Naive thymus-derived CD4-positive, alpha-beta T cell (primary cell): ENCODE measurements at regions of chr2 and their contacts with region 1.

Region 1: GRCh38 chr2:7427293-7428060 is 510.3 kb downstream of the RNF144A start:
- DNase-seq: peak in 7 of 9 donors; percentile 37 to 73 (median 63)
- ATAC-seq: peak; percentile 70
- H3K4me3 ChIP-seq: no peak overlapping the region
- H3K4me3 Mint-ChIP-seq: peak overlapping the region in 6 of 10 donors; percentile 0 to 87 (median 38)
- H3K27ac ChIP-seq: no peak overlapping the region
- H3K27ac Mint-ChIP-seq: peak overlapping the region in 7 of 9 donors; percentile 3 to 98 (median 78)
- H3K4me1 ChIP-seq: peaks cover 0 to 29% of the 10 kb centered on the region in 2 donors
- H3K4me1 Mint-ChIP-seq: peaks cover 26 to 49% (median 46%) of the 10 kb centered on the region in 7 donors
- H3K27me3 ChIP-seq: no peaks in the 10 kb centered on the region
- H3K27me3 Mint-ChIP-seq: peaks cover 0 to 6% (median 3%) of the 10 kb centered on the region in 5 donors

Region 2: DNA sequence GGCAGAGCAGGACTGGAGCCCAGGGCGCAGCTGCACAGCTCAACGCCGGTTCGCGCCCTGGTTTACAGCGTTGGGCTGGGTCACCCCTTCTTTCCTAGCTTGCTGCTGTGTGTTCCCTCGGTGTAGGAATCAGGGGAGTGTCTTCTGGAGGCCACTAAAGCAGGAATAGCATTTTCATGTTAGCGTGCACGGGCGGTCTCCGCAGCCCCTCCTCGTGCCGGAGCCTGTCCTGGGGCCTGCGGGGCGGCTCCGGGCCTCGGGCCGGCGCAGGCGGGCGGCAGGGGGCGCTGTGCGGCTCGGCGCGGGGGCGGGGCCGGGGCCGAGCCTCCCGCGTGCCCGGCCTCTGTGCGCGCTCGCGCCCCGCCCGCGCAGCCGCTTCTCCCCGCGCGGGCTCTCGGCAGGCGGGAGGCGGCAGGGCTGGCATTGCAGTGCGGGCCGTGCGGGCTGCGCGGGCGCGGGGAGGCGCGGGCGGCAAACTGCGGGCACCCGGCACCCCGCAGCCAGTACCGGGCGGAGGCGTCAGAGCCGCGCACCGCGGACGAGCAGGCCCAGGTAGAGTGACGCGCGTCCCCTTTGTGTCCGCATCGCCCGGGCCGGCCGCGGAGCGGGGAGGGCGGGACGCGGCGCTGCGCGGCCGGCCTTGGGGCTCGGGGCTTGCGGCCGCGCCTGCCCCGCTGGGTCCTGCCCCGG is 510.3 kb before region 1 on chr2 and contains the start of gene RNF144A:
- CTCF ChIA-PET with region 1: no interaction called
- POLR2A ChIA-PET with region 1: no interaction called
- intact Hi-C with region 1: loop called in 1 of 2 experiments (anchors 10 kb)
- DNase-seq: peak; percentile 63 to 91 (median 79)
- ATAC-seq: peak; percentile 95
- H3K4me3 ChIP-seq: peak within 1 kb of the TSS; percentile 61
- H3K4me3 Mint-ChIP-seq: peak within 1 kb of the TSS; percentile 78 to 87 (median 80)
- H3K27ac ChIP-seq: peak within 1 kb of the TSS; percentile 76
- H3K27ac Mint-ChIP-seq: peak within 1 kb of the TSS; percentile 20 to 99 (median 78)
- H3K4me1 ChIP-seq: peaks cover 25 to 80% of the 10 kb centered on the region in 2 donors
- H3K4me1 Mint-ChIP-seq: peaks cover 41 to 84% (median 77%) of the 10 kb centered on the region in 7 donors
- H3K27me3 ChIP-seq: no peaks in the 10 kb centered on the region
- H3K27me3 Mint-ChIP-seq: peaks cover 0 to 18% (median 0%) of the 10 kb centered on the region in 5 donors
- total RNA-seq, gene RNF144A: 40.0 to 74.4 (median 61.2) TPM

Region 3: GRCh38 chr2:7450188-7450832 is 22.8 kb after region 1 on chr2:
- CTCF ChIA-PET with region 1: interaction called, 8 read pairs
- POLR2A ChIA-PET with region 1: interaction called, 7 read pairs
- intact Hi-C with region 1: loop called (anchors 1 kb)
- DNase-seq: peak in 8 of 9 donors; percentile 66 to 88 (median 72)
- ATAC-seq: peak; percentile 91
- H3K4me3 ChIP-seq: no peak overlapping the region
- H3K4me3 Mint-ChIP-seq: peak overlapping the region; percentile 39 to 87 (median 77)
- H3K27ac ChIP-seq: peak overlapping the region; percentile 60
- H3K27ac Mint-ChIP-seq: peak overlapping the region; percentile 90 to 98 (median 96)
- H3K4me1 ChIP-seq: peaks cover 41 to 65% of the 10 kb centered on the region in 2 donors
- H3K4me1 Mint-ChIP-seq: peaks cover 44 to 93% (median 78%) of the 10 kb centered on the region in 7 donors
- H3K27me3 ChIP-seq: no peaks in the 10 kb centered on the region
- H3K27me3 Mint-ChIP-seq: no peaks in the 10 kb centered on the region

Region 4: GRCh38 chr2:7672027-7672684 is 244.7 kb after region 1 on chr2:
- CTCF ChIA-PET with region 1: interaction called, 24 read pairs
- POLR2A ChIA-PET with region 1: interaction called, 7 read pairs
- intact Hi-C with region 1: loop called (anchors 1 kb)
- DNase-seq: peak in 8 of 9 donors; percentile 17 to 69 (median 47)
- ATAC-seq: peak; percentile 61
- H3K4me3 ChIP-seq: no peak overlapping the region
- H3K4me3 Mint-ChIP-seq: peak overlapping the region; percentile 16 to 84 (median 69)
- H3K27ac ChIP-seq: no peak overlapping the region
- H3K27ac Mint-ChIP-seq: peak overlapping the region; percentile 77 to 91 (median 87)
- H3K4me1 ChIP-seq: peaks cover 9 to 19% of the 10 kb centered on the region in 2 donors
- H3K4me1 Mint-ChIP-seq: peaks cover 24 to 59% (median 40%) of the 10 kb centered on the region in 7 donors
- H3K27me3 ChIP-seq: no peaks in the 10 kb centered on the region
- H3K27me3 Mint-ChIP-seq: no peaks in the 10 kb centered on the region

Region 5: GRCh38 chr2:7825591-7826312 is 398.3 kb after region 1 on chr2:
- CTCF ChIA-PET with region 1: no interaction called
- POLR2A ChIA-PET with region 1: no interaction called
- intact Hi-C with region 1: loop called in 1 of 2 experiments (anchors 5 kb)
- DNase-seq: peak in 1 of 9 donors; percentile 63
- ATAC-seq: peak; percentile 36
- H3K4me3 ChIP-seq: no peak overlapping the region
- H3K4me3 Mint-ChIP-seq: peak overlapping the region in 1 of 10 donors; percentile 54
- H3K27ac ChIP-seq: no peak overlapping the region
- H3K27ac Mint-ChIP-seq: peak overlapping the region in 4 of 9 donors; percentile 10 to 78 (median 44)
- H3K4me1 ChIP-seq: no peaks in the 10 kb centered on the region
- H3K4me1 Mint-ChIP-seq: peaks cover 0 to 25% (median 4%) of the 10 kb centered on the region in 7 donors
- H3K27me3 ChIP-seq: no peaks in the 10 kb centered on the region
- H3K27me3 Mint-ChIP-seq: no peaks in the 10 kb centered on the region

Region 6: DNA sequence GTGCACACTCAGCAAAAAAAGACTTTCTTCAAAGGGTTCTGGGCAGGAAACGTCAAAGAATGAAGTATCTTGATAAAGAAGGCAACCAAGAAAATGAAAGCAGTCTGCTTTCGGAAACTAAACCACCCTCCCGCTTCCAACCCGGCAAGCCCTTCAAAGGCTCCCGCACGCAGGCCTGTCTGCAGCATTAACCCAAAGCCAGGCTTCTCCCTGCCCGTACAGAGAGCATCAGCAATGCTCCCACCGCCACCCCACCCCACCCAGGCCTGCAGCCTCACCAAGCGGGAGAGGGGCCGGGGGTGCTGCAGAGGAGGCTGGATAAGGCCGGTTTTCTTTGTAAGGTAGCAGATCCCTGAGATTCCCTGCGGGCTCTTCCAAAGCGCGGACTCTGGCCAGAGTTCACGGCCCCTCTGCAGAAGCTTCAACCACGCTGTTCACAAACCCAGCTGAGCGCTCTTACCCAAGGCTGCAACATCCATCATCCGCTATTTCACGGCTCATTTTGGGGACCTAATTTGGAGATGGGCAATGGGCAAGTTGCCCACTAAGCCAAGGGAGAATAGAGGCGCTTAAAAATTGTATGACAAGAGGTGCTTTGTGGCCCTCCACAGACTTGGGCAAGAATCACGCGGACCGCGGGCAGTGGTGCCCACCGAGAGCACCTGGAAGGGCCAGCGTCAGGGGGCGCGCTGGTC is 1028.8 kb after region 1 on chr2:
- CTCF ChIA-PET with region 1: no interaction called
- POLR2A ChIA-PET with region 1: no interaction called
- intact Hi-C with region 1: loop called in 1 of 2 experiments (anchors 2 kb)
- DNase-seq: peak in 8 of 9 donors; percentile 44 to 71 (median 58)
- ATAC-seq: peak; percentile 75
- H3K4me3 ChIP-seq: peak overlapping the region; percentile 60
- H3K4me3 Mint-ChIP-seq: peak overlapping the region; percentile 68 to 88 (median 84)
- H3K27ac ChIP-seq: no peak overlapping the region
- H3K27ac Mint-ChIP-seq: peak overlapping the region in 8 of 9 donors; percentile 2 to 94 (median 54)
- H3K4me1 ChIP-seq: peaks cover 11 to 21% of the 10 kb centered on the region in 2 donors
- H3K4me1 Mint-ChIP-seq: peaks cover 13 to 45% (median 25%) of the 10 kb centered on the region in 7 donors
- H3K27me3 ChIP-seq: no peaks in the 10 kb centered on the region
- H3K27me3 Mint-ChIP-seq: peaks cover 0 to 17% (median 6%) of the 10 kb centered on the region in 5 donors